Activated CD4-positive, alpha-beta T cell treated with anti-CD3 and anti-CD28 coated beads for 36 hours (primary cell): ENCODE measurements at regions of chrX and their contacts with region 1.

Region 1: DNA sequence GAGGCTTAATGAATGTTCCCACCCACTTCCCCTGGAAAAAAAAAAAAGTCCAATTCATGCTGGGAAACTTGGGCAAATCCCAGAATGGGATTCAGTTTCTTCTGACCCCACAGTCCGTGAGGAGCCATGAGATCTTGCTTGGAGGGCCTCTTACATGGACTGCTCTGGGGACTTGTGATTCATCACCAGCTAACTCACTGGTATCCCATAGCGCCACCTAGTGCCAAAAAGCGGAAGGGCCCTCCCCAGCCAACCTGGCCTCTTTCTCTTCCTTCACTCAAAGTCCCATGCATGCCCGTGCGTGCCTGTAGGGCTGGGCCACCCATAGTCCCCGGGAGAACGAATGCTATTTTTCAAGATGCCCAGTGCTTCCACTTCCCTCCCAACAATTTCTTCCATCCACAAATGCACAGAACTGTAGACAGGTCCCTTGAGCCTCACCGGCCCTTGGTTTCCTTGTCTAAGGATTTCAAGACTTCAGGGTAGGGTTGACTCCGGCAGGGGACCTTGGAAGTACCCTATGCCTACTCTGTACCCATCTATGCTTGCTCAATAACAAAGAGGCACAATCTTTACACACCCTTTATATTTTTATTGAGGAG is 5.1 kb downstream of the RTL5 start:
- DNase-seq: peak; percentile 88
- ATAC-seq: peak; percentile 91
- H3K4me3 Mint-ChIP-seq: no peak overlapping the region
- H3K27ac Mint-ChIP-seq: no peak overlapping the region
- H3K4me1 Mint-ChIP-seq: peaks cover 14% of the 10 kb centered on the region
- H3K27me3 Mint-ChIP-seq: peaks cover 19% of the 10 kb centered on the region

Region 2: DNA sequence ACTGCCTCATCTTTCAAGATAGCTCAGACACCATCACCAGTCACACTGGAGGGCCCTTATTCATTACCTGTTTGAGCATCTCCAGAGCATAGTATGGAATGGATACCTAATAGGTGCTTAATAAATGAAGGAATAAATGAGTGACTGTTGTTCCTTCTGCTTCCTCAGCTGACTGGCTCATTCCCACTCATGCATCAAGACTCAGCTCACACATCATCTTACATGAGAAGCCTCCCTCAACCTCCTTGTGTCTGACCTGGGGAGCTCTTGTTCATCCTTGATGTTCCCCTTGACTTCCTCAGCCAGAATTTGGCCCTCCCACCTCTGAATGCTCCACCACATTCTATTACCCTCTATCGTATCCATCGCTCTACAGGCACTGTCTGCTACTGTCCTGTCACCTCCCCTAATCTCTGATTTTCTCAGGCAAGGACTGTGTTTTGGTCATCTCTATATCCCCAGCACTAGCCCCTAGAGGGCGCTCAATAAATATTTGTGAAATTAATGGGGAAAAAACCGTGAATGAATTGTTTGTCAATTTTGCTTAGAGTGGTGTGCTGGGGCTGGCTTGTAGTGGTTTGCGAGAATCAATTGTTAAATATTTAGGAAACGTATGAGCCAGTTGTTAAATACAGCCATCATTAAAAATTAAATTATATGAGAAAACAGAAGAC is 127.7 kb before region 1 on chrX:
- CTCF ChIA-PET with region 1: interaction called, 5 read pairs
- POLR2A ChIA-PET with region 1: no interaction called
- intact Hi-C with region 1: loop called (anchors 1 kb)
- DNase-seq: peak; percentile 44
- ATAC-seq: no peak
- H3K4me3 Mint-ChIP-seq: no peak overlapping the region
- H3K27ac Mint-ChIP-seq: no peak overlapping the region
- H3K4me1 Mint-ChIP-seq: no peaks in the 10 kb centered on the region
- H3K27me3 Mint-ChIP-seq: peaks cover 2% of the 10 kb centered on the region

Region 3: GRCh38 chrX:72018277-72019112 is 108.1 kb before region 1 on chrX:
- CTCF ChIA-PET with region 1: interaction called, 74 read pairs
- POLR2A ChIA-PET with region 1: interaction called, 5 read pairs
- intact Hi-C with region 1: loop called (anchors 1 kb)
- DNase-seq: peak; percentile 89
- ATAC-seq: peak; percentile 93
- H3K4me3 Mint-ChIP-seq: no peak overlapping the region
- H3K27ac Mint-ChIP-seq: no peak overlapping the region
- H3K4me1 Mint-ChIP-seq: peaks cover 29% of the 10 kb centered on the region
- H3K27me3 Mint-ChIP-seq: peaks cover 7% of the 10 kb centered on the region

Region 4: DNA sequence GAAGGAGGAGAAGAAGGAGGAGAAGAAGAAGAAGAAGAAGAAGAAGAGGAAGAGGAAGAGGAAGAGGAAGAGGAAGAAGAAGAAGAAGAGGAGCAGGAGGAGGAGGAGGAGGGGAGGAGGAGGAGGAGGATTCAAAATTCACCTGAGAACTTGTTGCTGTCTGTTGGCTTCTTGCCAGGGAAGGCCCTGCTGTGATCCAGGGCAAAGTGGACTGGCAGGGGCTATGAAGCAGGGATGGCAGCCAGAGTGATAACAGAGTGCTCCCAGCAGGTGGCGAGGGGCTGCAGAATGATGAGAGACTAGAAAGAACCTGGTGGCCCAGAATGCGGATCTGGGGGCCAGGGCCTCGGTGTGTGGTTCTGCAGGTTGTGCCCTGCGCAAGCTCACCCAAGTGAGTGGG is 77.7 kb before region 1 on chrX:
- CTCF ChIA-PET with region 1: no interaction called
- POLR2A ChIA-PET with region 1: no interaction called
- intact Hi-C with region 1: loop called in 1 of 2 experiments (anchors 1 kb)
- DNase-seq: peak; percentile 15
- ATAC-seq: no peak
- H3K4me3 Mint-ChIP-seq: no peak overlapping the region
- H3K27ac Mint-ChIP-seq: no peak overlapping the region
- H3K4me1 Mint-ChIP-seq: peaks cover 15% of the 10 kb centered on the region
- H3K27me3 Mint-ChIP-seq: no peaks in the 10 kb centered on the region

Region 5: DNA sequence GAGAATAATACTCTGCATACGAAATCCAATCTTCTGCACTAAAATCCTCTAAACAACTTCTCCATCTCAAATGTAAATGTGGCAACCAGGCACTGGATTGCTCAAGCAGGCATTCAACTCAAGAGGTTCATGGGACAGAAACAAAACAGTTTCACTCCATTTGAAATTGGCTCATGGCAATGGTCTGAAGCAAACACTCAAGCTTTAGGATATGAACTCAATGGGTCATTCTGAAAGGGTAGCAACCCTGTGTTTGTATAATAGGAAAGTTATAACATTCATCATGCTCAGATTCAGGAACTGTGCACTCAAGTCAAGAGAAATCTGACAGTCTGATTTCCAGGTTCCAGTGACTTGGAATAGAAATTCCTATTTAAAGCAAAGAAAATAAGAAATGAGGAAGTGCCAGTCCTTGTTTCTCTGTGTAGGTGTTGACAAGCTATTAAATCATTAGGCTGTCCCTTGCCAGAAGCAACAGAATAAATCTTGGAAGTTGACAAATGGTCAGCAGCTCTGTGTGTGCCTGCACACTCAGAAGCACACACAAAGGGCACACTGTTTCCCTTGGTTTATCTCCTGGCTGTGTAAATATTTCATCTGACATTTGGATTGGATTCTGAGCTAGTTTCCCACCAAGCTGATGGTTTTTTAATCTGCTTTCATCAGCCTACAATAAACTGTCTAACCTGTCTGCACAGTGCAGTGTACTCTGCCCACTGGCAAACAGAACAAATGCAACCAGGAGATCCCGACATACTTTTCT is 255.0 kb after region 1 on chrX:
- CTCF ChIA-PET with region 1: no interaction called
- POLR2A ChIA-PET with region 1: no interaction called
- intact Hi-C with region 1: no loop called
- DNase-seq: no peak
- ATAC-seq: no peak
- H3K4me3 Mint-ChIP-seq: no peak overlapping the region
- H3K27ac Mint-ChIP-seq: no peak overlapping the region
- H3K4me1 Mint-ChIP-seq: no peaks in the 10 kb centered on the region
- H3K27me3 Mint-ChIP-seq: no peaks in the 10 kb centered on the region